CD8-positive, alpha-beta T cell (primary cell): ENCODE measurements at regions of chr14 and their contacts with region 1.

Region 1: GRCh38 chr14:63641473-63642228 is at the start of gene WDR89:
- DNase-seq: peak; percentile 91 to 100 (median 94)
- ATAC-seq: peak; percentile 85
- H3K4me3 ChIP-seq: peak within 1 kb of the TSS; percentile 85 to 89
- H3K4me3 Mint-ChIP-seq: peak within 1 kb of the TSS; percentile 87
- H3K27ac ChIP-seq: peak within 1 kb of the TSS; percentile 94 to 99
- H3K27ac Mint-ChIP-seq: peak within 1 kb of the TSS; percentile 96
- H3K4me1 ChIP-seq: peaks cover 30% of the 10 kb centered on the region
- H3K4me1 Mint-ChIP-seq: peaks cover 57% of the 10 kb centered on the region
- H3K27me3 ChIP-seq: no peaks in the 10 kb centered on the region
- H3K27me3 Mint-ChIP-seq: no peaks in the 10 kb centered on the region
- CTCF ChIP-seq: peak; percentile 72
- total RNA-seq, gene WDR89: 13.6 to 13.7 TPM

Region 2: GRCh38 chr14:61761959-61762786 is 1879.5 kb before region 1 on chr14 and contains the start of gene SNAPC1:
- CTCF ChIA-PET with region 1: no interaction called
- POLR2A ChIA-PET with region 1: no interaction called
- intact Hi-C with region 1: loop called in 1 of 2 experiments (anchors 5 kb)
- DNase-seq: peak; percentile 96 to 100 (median 98)
- ATAC-seq: peak; percentile 91
- H3K4me3 ChIP-seq: peak within 1 kb of the TSS; percentile 87 to 90
- H3K4me3 Mint-ChIP-seq: peak within 1 kb of the TSS; percentile 98
- H3K27ac ChIP-seq: peak within 1 kb of the TSS; percentile 84 to 95
- H3K27ac Mint-ChIP-seq: peak within 1 kb of the TSS; percentile 100
- H3K4me1 ChIP-seq: peaks cover 31% of the 10 kb centered on the region
- H3K4me1 Mint-ChIP-seq: peaks cover 48% of the 10 kb centered on the region
- H3K27me3 ChIP-seq: no peaks in the 10 kb centered on the region
- H3K27me3 Mint-ChIP-seq: no peaks in the 10 kb centered on the region
- CTCF ChIP-seq: no peak
- total RNA-seq, gene SNAPC1: 6.8 to 7.4 TPM

Region 3: DNA sequence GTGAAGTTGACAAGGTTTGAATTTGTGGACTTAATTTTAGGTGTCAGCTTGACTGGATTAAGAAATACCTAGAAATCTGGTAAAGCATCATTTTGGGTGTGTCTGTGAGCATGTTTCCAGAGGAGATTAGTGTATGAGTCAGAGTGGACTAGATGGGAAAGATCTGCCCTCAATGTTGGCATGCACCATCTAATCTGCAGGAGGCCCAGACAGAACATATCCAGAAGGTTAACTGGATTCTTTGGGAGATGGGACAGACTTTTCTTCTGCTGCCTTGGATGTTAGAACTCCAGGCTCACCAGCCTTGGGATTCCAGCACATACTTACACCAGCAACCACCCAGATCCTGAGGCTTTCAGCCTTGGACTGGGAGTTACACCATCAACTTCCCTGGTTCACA is 72.1 kb after region 1 on chr14:
- CTCF ChIA-PET with region 1: no interaction called
- POLR2A ChIA-PET with region 1: interaction called, 12 read pairs
- intact Hi-C with region 1: no loop called
- DNase-seq: no peak
- ATAC-seq: no peak
- H3K4me3 ChIP-seq: no peak overlapping the region
- H3K4me3 Mint-ChIP-seq: no peak overlapping the region
- H3K27ac ChIP-seq: peak overlapping the region in 1 of 2 experiments; percentile 32
- H3K27ac Mint-ChIP-seq: no peak overlapping the region
- H3K4me1 ChIP-seq: peaks cover 19% of the 10 kb centered on the region
- H3K4me1 Mint-ChIP-seq: peaks cover 41% of the 10 kb centered on the region
- H3K27me3 ChIP-seq: no peaks in the 10 kb centered on the region
- H3K27me3 Mint-ChIP-seq: no peaks in the 10 kb centered on the region
- CTCF ChIP-seq: no peak

Region 4: DNA sequence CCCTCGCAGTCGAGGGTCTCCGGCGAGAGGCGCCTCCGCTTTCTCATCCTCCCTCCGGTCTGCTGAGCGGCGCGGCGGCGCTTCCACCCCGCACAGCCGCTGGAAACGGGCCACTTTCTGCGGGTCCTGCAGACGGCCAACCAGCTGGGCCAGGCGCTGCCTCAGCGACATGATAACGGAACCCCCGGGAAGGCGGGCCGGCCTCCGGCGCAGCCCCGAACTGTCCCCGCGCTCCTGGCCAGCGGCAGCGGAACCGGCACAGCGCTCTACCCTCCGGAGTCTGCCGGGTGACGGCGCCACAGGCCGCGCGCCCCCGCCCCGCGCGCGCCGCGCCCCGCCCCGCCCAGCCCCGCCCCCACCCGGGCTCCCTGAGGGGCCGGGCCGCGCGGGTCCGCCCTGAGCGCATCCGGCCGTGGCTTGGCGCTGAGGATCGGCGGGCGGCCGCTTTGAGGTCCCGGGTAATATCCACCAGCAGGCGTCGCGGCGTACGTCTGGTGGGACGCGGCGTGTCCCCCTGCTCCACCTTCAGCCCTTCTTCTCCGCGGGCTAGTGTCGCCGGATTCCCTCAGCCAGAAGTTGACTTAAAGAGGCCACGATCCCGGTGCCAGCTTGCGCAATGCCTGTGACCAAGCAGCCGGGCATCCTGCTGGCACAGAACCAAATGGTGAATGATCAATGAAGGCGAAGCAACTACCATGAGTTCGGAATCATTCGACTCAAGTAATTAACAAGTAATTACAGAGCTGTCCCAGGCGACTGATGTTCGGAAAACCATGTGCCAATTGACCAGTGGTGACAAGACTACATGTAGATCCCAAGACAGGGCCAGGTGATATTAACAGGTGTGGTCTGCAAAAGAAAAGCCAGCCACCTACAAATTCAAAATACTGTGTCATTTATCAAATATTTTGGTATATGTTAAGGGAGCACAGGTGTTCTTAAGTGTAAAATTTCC is 86.4 kb after region 1 on chr14 and contains the start of gene SGPP1:
- CTCF ChIA-PET with region 1: interaction called, 8 read pairs
- POLR2A ChIA-PET with region 1: interaction called, 21 read pairs
- intact Hi-C with region 1: loop called (anchors 1 to 2 kb)
- DNase-seq: peak; percentile 62 to 92 (median 78)
- ATAC-seq: peak; percentile 90
- H3K4me3 ChIP-seq: peak within 1 kb of the TSS; percentile 83 to 88
- H3K4me3 Mint-ChIP-seq: peak within 1 kb of the TSS; percentile 98
- H3K27ac ChIP-seq: peak within 1 kb of the TSS; percentile 72 to 82
- H3K27ac Mint-ChIP-seq: peak within 1 kb of the TSS; percentile 94
- H3K4me1 ChIP-seq: peaks cover 31% of the 10 kb centered on the region
- H3K4me1 Mint-ChIP-seq: peaks cover 44% of the 10 kb centered on the region
- H3K27me3 ChIP-seq: no peaks in the 10 kb centered on the region
- H3K27me3 Mint-ChIP-seq: no peaks in the 10 kb centered on the region
- CTCF ChIP-seq: no peak
- total RNA-seq, gene SGPP1: 15.9 to 16.5 TPM

Region 5: DNA sequence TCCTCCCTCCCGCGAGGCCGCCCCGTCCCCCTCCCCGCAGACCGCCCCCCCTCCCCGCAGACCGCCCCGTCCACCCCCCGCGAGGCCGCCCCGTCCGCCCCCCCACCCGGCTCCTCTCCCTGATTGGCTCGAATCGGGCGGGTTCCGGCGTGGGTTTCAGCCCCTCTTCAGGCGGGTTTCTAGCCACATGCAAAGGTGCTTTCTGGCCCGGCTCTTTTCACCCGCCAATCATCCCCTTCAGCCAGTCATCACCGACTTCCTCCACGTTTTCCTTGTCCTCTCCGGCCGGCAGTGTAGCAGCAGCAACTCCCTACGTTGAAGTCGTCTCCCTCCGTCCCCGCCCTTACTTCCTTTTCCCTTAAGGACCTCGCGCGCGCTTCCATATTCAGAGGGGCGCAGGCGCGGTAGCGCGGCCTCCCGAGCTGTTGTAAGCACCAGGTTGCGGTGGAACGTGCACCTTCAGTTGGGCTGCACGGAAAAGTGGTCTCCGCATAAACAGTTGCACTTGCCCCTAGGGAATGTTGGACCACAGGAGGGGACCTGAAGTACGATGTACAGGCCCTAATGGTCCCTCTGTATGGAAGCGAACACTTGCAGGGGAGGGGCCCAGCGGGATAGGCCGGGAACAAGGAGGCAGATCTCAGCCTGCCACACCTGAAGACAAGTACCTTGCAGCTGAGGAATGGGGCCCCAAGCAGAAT is 697.1 kb after region 1 on chr14:
- CTCF ChIA-PET with region 1: no interaction called
- POLR2A ChIA-PET with region 1: no interaction called
- intact Hi-C with region 1: loop called in 1 of 2 experiments (anchors 2 kb)
- DNase-seq: peak; percentile 54 to 93 (median 85)
- ATAC-seq: peak; percentile 79
- H3K4me3 ChIP-seq: peak overlapping the region; percentile 67 to 87
- H3K4me3 Mint-ChIP-seq: peak overlapping the region; percentile 97
- H3K27ac ChIP-seq: peak overlapping the region; percentile 38 to 58
- H3K27ac Mint-ChIP-seq: peak overlapping the region; percentile 96
- H3K4me1 ChIP-seq: peaks cover 19% of the 10 kb centered on the region
- H3K4me1 Mint-ChIP-seq: peaks cover 26% of the 10 kb centered on the region
- H3K27me3 ChIP-seq: no peaks in the 10 kb centered on the region
- H3K27me3 Mint-ChIP-seq: no peaks in the 10 kb centered on the region
- CTCF ChIP-seq: no peak

Region 6: DNA sequence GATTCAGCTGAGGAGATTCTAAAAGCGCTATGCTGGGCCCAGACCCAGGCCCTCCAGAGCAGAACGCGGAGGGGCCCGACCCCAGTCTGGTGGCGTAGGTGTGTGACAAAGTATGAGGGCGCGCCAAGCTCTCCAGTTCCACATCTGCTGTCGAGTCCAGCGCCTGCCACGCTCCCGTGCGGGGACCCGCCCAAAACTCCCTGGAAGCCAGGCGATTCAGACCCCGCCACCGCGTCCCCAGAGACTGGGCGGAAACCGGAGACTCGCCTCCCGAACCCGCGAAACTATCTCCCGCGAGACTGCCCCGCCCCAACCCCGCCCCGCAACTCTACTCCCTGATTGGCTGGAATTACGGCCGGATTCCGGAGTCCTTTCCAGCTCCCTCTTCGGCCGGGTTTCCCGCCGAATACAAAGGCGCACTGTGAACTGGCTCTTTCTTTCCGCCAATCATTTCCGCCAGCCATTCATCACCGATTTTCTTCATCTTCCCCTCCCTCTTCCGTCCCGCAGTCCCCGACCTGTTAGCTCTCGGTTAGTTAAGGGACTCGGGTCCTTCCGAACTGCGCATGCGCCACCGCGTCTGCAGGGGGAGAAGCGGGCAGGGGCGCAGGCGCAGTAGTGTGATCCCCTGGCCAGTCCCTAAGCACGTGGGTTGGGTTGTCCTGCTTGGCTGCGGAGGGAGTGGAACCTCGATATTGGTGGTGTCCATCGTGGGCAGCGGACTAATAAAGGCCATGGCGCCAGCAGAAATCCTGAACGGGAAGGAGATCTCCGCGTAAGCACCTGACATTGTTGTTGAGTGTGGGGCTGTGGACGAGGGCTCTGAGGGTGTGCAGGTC is 746.3 kb after region 1 on chr14 and contains the start of gene MTHFD1:
- CTCF ChIA-PET with region 1: no interaction called
- POLR2A ChIA-PET with region 1: no interaction called
- intact Hi-C with region 1: loop called in 1 of 2 experiments (anchors 5 kb)
- DNase-seq: peak; percentile 88 to 98 (median 97)
- ATAC-seq: peak; percentile 84
- H3K4me3 ChIP-seq: peak within 1 kb of the TSS; percentile 79 to 80
- H3K4me3 Mint-ChIP-seq: peak within 1 kb of the TSS; percentile 99
- H3K27ac ChIP-seq: peak within 1 kb of the TSS; percentile 33 to 50
- H3K27ac Mint-ChIP-seq: peak within 1 kb of the TSS; percentile 95
- H3K4me1 ChIP-seq: peaks cover 20% of the 10 kb centered on the region
- H3K4me1 Mint-ChIP-seq: peaks cover 37% of the 10 kb centered on the region
- H3K27me3 ChIP-seq: no peaks in the 10 kb centered on the region
- H3K27me3 Mint-ChIP-seq: no peaks in the 10 kb centered on the region
- CTCF ChIP-seq: no peak
- total RNA-seq, gene MTHFD1: 14.4 to 15.6 TPM